Mammary epithelial cell (primary cell): ENCODE measurements at regions of chr14 and their contacts with region 1.

Region 1: DNA sequence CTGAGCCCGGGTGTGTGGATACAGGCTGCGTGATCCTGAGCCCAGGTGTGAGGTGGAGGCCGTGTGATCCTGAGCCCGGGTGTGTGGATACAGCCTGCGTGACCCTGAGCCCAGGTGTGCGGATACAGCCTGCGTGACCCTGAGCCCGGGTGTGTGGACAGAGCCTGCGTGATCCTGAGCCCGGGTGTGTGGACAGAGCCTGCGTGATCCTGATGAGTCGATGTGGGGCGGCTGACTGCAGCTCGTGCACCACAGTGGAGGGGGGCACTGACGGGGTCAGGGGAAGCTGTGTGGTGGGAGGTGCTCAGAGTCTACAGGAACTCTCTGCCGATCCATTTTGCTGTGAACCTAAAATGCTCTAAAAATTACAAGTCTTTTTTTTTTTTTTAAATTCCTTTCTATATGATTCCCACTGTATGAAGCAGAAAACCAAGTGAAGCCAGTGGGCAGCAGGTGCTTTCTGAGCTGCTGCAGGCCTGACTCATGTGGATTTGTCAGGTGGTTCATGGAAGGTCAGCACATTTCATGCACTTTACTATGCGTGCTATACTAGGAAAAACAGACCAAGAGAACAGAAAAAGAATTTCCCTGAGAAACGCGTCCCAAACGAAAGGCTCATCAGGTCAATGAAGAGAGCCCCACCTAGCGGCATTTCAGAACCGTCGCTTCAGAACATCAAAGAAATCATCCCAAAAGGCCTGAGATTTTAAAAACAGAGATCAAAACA is 19.3 kb downstream of the BRF1 start:
- DNase-seq: peak; percentile 58
- H3K4me3 ChIP-seq: no peak overlapping the region
- H3K27ac ChIP-seq: no peak overlapping the region
- H3K4me1 ChIP-seq: no peaks in the 10 kb centered on the region
- H3K27me3 ChIP-seq: no peaks in the 10 kb centered on the region
- CTCF ChIP-seq: peak; percentile 70 to 73

Region 2: DNA sequence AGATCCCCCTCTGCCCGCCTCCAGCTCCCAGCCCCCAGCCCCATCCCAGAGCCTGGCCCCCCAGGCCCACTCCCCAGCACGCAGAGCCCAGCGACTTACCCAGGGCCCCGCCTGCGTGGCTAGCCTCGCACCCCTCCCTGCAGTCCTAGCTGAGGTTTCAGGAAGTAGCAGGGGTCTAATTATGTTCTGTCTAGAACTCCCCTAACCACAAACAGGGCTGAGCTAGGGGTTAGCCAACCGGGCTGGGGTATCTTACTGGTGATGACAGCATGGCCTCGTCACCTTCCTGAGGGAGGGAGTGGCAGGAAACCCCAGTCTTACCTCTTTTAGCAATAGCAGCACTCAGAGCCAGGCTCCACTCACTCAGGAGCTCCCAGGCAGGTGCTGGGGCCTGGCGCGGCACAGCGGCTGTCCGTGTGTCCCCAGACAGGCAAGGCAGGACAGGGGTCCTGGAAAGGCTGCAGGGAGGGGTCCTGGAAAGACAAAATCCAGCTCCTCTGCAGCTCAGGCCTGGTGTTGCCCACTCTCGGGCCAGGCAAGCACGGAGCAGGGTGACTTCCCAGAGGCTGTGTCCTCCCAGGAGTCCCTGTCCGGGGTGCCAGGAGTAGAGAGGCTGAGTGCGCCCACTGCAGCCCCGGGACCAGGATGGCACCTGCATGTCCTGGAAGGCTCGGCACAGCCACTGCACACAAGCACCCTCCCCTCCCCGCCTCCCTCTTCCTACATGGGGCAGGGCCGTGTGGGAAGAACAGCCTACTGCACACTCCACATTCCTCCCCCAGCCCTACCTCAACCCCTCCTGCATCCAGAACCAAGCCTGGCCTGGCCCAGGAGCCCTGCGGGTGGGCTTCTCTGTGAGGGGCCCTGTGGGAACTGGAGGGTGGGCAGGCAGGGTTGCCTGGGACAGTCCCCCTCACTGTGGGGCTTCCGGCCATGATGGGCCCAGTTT is 216.0 kb before region 1 on chr14 and contains the start of gene GPR132:
- CTCF ChIA-PET with region 1: no interaction called
- dilution Hi-C with region 1: no loop called
- in situ Hi-C with region 1: no loop called
- intact Hi-C with region 1: no loop called
- DNase-seq: peak; percentile 38
- H3K4me3 ChIP-seq: no peak within 1 kb of the TSS
- H3K27ac ChIP-seq: no peak within 1 kb of the TSS
- H3K4me1 ChIP-seq: peaks cover 10% of the 10 kb centered on the region
- H3K27me3 ChIP-seq: no peaks in the 10 kb centered on the region
- CTCF ChIP-seq: no peak
- total RNA-seq, gene GPR132: 0.24 TPM in 1 of 2 donors, not detected in the other

Region 3: DNA sequence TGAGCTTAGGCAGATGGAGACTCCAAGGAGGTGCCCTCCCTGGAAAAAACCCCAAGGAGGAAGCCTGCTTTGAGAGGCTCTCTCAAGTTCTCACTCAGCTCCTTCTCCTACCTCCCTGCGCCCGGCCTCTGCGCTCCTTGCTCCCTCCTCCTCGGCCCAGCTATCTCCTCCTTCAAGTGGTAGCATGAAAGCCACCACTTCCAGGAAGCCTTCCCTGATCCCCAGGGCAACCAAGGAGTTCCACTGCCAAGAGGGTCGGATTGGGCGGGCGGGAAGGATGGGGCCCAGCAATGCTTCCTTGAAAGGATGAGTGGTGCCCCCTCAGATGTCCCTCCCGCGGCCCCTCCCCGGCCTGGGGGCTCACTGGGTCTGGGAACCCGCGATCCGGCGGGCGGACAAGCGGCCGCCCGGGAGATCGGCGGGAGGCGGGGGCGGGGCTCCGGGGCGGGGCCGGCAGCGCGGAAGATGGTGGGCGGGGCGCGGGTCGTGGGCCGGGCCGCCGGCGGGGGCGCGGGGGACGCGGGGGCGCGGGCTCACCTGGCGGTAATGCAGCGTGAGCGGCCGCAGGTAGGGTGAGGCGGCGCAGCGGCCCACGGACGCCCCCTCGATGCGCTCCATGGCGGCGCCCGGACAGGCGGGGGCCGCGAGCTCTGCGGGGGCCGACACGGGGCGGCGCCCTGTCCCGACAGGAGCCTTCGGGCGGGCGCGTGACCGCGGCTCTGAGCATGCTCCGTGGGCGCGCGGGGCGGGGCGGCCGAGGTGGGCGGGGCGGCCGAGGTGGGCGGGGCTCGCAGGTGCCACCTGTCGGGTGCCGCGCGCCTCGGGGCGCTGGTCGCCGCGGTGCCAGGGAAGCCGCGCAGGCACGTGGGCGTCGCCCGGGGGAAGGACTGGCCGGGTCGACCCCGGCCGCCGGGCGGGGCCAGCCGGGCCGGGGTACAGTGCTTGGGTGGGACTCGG is 100.7 kb before region 1 on chr14 and contains the start of gene NUDT14:
- CTCF ChIA-PET with region 1: no interaction called
- dilution Hi-C with region 1: loop called (anchors 25 kb)
- in situ Hi-C with region 1: no loop called
- intact Hi-C with region 1: no loop called
- DNase-seq: peak; percentile 68
- H3K4me3 ChIP-seq: peak within 1 kb of the TSS; percentile 40 to 68 (median 54)
- H3K27ac ChIP-seq: no peak within 1 kb of the TSS
- H3K4me1 ChIP-seq: peaks cover 9% of the 10 kb centered on the region
- H3K27me3 ChIP-seq: no peaks in the 10 kb centered on the region
- CTCF ChIP-seq: no peak
- total RNA-seq, gene NUDT14: 32.0 to 41.9 TPM

Region 4: DNA sequence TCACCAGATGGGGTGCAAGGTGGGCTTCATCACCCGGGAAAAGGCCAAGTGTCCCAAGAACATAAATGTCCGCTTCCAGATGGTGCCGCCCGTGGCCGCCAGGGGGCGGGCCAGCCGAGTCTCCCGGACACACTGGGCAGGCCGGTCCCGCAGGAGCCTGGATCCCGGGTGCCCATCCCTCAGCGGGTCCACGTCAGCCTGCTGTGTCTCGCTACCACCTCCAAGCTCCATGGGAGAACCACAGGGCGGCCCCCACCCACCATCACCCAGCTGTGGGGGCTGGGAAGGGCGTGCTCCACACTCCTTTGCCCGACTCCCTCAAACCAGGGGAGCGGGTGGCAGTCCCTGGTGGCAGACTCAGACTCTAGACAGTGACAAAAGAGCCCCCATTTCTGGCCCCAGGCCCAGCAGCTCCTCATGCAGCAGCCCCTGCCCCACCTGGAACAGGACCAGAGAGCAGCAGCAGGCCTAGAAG is 78.4 kb before region 1 on chr14:
- CTCF ChIA-PET with region 1: no interaction called
- dilution Hi-C with region 1: loop called (anchors 25 kb)
- in situ Hi-C with region 1: no loop called
- intact Hi-C with region 1: loop called (anchors 1 kb)
- DNase-seq: peak; percentile 28
- H3K4me3 ChIP-seq: no peak overlapping the region
- H3K27ac ChIP-seq: no peak overlapping the region
- H3K4me1 ChIP-seq: peaks cover 22% of the 10 kb centered on the region
- H3K27me3 ChIP-seq: no peaks in the 10 kb centered on the region
- CTCF ChIP-seq: peak; percentile 81 to 90

Region 5: GRCh38 chr14:105351920-105352851 is 70.7 kb after region 1 on chr14:
- CTCF ChIA-PET with region 1: no interaction called
- dilution Hi-C with region 1: no loop called
- in situ Hi-C with region 1: no loop called
- intact Hi-C with region 1: loop called (anchors 5 kb)
- DNase-seq: peak; percentile 82
- H3K4me3 ChIP-seq: no peak overlapping the region
- H3K27ac ChIP-seq: no peak overlapping the region
- H3K4me1 ChIP-seq: no peaks in the 10 kb centered on the region
- H3K27me3 ChIP-seq: no peaks in the 10 kb centered on the region
- CTCF ChIP-seq: peak; percentile 85 to 90